ENCODE measurements at regions of chr1 and their contacts with region 1.

Region 1: DNA sequence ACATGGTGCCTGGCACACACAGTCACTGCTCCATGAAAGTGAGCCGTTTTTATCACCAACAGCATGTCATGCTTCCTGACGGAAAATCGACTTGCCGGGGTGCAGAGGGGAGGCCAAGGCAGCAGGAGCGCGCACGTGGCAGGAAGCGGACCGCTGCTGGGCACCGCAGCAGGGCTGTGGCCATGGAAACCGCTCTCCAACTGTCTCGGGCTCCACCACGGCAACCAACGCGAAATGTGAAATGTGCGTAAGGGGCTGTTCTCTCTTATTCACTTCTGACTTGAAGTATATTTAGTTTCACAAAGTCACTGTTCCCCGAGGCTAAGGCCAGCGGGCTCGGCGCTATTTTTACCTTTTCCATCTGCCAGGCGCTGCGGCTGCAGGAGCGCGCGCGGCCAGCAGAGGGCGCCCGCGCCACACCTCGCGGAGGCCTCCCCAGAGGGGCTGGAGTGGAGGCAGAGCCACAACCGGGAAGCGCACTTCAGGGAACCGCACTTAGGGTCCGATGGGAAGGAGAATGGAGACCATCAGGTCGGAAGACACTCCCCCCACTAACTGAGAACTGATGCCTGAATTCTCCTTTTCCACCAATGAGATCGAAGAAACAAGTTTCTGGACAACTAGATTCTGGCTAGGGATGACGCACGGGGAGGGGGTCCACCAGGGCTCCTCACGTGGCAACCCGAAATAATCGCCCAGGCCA is 19.7 kb downstream of the RCC2 start:
- DNase-seq: peak; percentile 73
- ATAC-seq: peak; percentile 67 to 85

Region 2: DNA sequence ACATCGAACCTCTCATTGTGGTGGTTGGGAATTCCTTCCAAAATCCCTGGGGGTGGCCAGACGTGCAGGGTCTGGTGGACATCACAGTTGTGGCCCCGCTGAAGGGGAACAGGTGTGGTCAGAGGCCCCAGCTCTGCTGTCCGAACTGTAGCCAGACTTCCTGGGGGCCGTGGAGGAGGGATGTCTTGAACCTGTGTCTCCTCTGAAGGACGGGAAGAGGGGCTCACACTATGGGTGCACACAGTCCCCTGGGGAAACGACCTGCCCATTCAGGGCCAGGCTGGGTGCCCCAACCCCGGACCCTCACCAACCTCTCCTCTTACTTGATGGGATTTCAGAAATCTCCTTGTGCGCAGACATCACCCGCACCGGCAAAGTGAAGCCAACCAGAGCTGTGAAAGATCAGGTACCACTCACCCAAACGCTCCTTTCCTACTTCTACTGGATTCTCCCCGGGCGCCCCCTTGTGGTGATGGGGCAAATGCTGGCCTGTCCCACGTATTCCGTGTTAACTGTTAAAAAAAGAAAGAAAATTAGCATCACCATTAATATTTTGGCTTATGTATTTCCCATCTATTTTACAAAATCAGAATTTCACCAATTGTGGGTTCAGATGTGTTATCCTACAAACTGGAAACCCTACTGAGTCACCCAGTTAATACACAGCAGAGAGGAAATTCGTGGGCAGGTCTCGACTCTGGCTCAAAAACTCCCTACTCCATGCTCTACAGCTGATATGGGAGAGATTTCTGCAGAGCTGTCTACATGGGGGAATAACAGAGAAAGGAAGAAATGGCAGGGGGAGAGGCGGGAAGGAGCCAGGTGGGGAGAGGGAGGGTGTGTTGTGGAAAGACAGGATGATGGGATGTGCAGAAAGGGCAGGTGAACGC is 83.7 kb before region 1 on chr1:
- intact Hi-C with region 1: no loop called
- DNase-seq: peak; percentile 62
- ATAC-seq: peak in 1 of 2 donors; percentile 57

Region 3: GRCh38 chr1:17485280-17485679 is 65.5 kb after region 1 on chr1:
- intact Hi-C with region 1: loop called in 1 of 2 experiments (anchors 5 kb)
- DNase-seq: no peak
- ATAC-seq: no peak

Region 4: GRCh38 chr1:18182398-18183160 is 762.8 kb after region 1 on chr1:
- intact Hi-C with region 1: no loop called
- DNase-seq: peak; percentile 37
- ATAC-seq: peak; percentile 30 to 90

Measured in left cardiac atrium (tissue), 4 donors.